ENCODE measurements at regions of chr9 and their contacts with region 1.

Region 1: DNA sequence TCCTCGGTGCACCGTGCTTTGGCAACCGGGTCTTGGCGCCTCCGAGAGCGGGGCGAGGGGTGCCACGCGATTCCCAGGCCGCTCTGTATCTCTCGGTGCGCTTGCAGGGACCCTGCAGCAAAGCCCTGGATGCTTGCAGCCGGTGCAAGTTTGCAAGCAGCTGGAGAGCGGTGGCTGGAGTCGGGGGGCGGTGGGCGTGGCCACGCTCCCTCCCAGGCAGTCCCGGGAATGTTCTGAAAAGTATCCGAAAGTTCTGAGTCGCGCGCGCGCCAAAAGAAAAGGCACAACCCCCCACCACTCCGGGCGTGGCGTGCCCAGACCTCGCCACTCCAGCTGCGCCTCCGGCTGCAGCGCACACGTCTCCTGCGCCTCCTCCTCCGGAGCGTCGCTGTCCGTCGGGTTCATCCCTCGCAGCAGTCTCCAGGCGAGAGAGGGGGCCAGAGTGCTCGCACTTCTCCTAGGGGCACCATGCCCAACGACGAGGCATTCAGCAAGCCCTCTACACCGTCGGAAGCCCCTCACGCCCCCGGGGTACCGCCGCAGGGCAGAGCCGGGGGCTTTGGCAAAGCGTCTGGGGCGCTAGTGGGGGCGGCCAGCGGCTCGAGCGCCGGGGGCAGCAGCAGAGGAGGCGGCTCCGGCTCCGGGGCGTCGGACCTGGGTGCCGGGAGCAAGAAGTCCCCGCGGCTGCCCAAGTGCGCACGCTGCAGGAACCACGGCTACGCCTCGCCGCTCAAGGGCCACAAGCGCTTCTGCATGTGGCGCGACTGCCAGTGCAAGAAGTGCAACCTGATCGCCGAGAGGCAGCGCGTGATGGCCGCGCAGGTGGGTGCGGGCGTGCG is at the start of gene DMRT1:
- DNase-seq: no peak
- ATAC-seq: no peak
- H3K4me3 Mint-ChIP-seq: no peak within 1 kb of the TSS
- H3K27ac Mint-ChIP-seq: no peak within 1 kb of the TSS
- H3K4me1 Mint-ChIP-seq: no peaks in the 10 kb centered on the region
- H3K27me3 Mint-ChIP-seq: peaks cover 53% of the 10 kb centered on the region
- CTCF ChIP-seq: no peak
- total RNA-seq, gene DMRT1: not detected in 2 replicates

Region 2: GRCh38 chr9:971901-972500 is 130.4 kb after region 1 on chr9:
- CTCF ChIA-PET with region 1: no interaction called
- POLR2A ChIA-PET with region 1: no interaction called
- intact Hi-C with region 1: loop called (anchors 5 kb)
- DNase-seq: no peak
- ATAC-seq: no peak
- H3K4me3 Mint-ChIP-seq: no peak overlapping the region
- H3K27ac Mint-ChIP-seq: no peak overlapping the region
- H3K4me1 Mint-ChIP-seq: peaks cover 10% of the 10 kb centered on the region
- H3K27me3 Mint-ChIP-seq: peaks cover 58% of the 10 kb centered on the region
- CTCF ChIP-seq: no peak

Region 3: DNA sequence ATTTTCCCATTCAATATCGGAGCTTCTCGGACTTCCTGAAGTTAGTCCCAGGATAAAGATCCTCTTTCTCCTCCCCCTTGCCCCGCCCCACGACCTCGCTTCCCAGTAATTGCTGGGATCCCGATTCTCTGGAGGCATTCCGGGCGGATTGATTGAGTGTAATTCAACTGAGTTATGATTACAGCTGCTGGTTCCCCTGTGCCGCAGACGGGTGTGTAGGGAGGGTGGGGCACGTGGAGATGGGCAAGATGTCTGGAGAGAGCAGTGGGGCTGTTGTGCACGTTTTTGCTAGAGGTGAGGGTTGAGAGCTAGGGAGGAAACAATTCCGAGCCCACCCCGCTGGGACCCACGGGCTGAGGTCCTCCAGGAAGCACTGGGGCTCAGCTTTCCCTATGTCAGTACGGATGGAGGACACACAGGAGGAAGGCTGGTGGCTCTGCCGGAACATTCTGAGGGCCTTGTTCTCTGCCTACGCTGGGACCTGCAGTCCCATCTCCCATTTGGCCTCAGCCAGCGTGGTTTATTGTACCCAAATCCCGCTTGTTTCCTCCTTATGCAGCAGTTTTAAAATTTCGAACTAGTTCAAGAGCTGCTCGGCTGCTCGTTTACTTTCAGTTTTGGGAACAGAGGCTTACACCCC is 206.1 kb after region 1 on chr9:
- CTCF ChIA-PET with region 1: no interaction called
- POLR2A ChIA-PET with region 1: no interaction called
- intact Hi-C with region 1: loop called (anchors 5 kb)
- DNase-seq: no peak
- ATAC-seq: no peak
- H3K4me3 Mint-ChIP-seq: peak overlapping the region; percentile 80
- H3K27ac Mint-ChIP-seq: peak overlapping the region; percentile 54
- H3K4me1 Mint-ChIP-seq: peaks cover 43% of the 10 kb centered on the region
- H3K27me3 Mint-ChIP-seq: peaks cover 79% of the 10 kb centered on the region
- CTCF ChIP-seq: no peak

Measured in activated B cell treated with CpG ODN at 0.5 μM for 24 hours (primary cell).